ENCODE measurements at regions of chr18 and their contacts with region 1.

Region 1: DNA sequence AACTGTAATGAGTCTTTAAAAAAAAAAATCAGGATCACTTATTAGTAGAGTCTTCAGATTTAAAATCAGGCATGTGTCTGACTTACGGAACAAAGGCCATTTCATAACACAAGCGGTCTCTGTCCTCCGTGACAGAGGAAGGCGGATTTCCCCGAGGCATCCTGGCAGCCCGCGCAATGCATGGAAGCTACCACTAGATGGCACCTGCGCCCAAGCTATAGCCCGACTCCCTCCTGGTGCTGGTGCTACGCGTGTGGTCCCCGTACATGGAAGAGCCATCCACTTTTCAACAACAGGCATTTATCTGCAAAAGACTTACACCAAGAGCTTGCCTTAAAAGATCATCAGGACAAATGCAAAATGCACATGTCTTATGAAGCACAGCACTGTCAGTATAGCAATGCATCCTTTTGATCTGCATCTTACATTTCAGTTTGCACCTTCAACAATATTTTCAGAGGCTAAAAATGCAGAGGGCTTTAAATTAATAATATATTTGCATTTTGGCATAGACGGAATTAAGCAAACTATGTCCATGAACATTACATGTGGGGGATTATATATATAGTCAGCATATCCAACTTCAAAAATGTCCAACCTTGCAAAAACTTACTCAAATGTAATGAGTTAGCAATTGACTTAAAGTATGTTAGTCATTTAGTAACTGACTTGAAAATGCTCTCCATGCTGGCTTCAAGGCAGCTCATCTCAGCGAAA is 96.0 kb downstream of the ZNF516 start:
- DNase-seq: peak; percentile 57 to 86 (median 78)
- ATAC-seq: peak; percentile 96
- H3K4me3 ChIP-seq: no peak overlapping the region
- H3K4me3 Mint-ChIP-seq: no peak overlapping the region
- H3K27ac ChIP-seq: no peak overlapping the region
- H3K27ac Mint-ChIP-seq: no peak overlapping the region
- H3K4me1 ChIP-seq: no peaks in the 10 kb centered on the region
- H3K4me1 Mint-ChIP-seq: peaks cover 6% of the 10 kb centered on the region
- H3K27me3 ChIP-seq: no peaks in the 10 kb centered on the region
- H3K27me3 Mint-ChIP-seq: peaks cover 4% of the 10 kb centered on the region
- CTCF ChIP-seq: peak; percentile 96

Region 2: GRCh38 chr18:76384861-76385680 is 14.0 kb before region 1 on chr18:
- CTCF ChIA-PET with region 1: interaction called, 23 read pairs
- POLR2A ChIA-PET with region 1: interaction called, 5 read pairs
- intact Hi-C with region 1: no loop called
- DNase-seq: no peak
- ATAC-seq: no peak
- H3K4me3 ChIP-seq: no peak overlapping the region
- H3K4me3 Mint-ChIP-seq: no peak overlapping the region
- H3K27ac ChIP-seq: no peak overlapping the region
- H3K27ac Mint-ChIP-seq: no peak overlapping the region
- H3K4me1 ChIP-seq: peaks cover 21% of the 10 kb centered on the region
- H3K4me1 Mint-ChIP-seq: peaks cover 27% of the 10 kb centered on the region
- H3K27me3 ChIP-seq: no peaks in the 10 kb centered on the region
- H3K27me3 Mint-ChIP-seq: no peaks in the 10 kb centered on the region
- CTCF ChIP-seq: no peak

Region 3: DNA sequence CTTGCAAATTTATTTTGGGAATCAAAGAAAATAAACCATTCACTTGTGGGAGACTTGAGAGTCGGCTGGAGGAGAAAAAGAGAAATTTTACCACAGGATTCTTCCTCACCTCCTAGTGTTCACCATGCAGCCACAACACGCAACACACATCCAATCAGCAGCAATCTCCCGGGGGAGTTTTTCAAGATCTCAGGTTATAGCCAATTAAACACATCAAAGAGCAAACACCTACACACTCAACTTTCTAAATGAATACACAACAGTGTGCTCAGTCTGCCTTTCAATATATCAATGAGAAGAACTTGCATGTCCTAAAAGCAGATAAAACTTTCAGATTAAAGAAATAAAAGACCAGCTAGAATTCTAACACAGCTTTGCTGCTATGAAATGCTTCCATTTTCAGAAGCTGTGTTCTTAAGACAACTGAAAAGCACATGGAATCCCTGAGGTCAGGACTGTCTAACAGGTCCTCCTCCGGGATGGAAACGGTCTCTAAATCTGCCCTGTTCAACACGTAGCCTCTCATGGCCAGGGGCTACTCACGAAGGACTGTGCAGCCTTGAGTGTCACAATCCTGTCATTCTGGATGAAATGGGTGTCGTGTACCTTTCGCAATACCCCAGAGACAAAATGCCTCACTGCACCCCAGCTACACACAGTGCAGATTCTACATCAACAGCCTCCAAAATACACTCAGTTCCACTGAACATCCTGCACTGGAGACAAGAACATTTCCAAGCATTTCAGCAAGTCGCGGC is 11.8 kb after region 1 on chr18:
- CTCF ChIA-PET with region 1: interaction called, 15 read pairs
- POLR2A ChIA-PET with region 1: interaction called, 4 read pairs
- intact Hi-C with region 1: no loop called
- DNase-seq: no peak
- ATAC-seq: no peak
- H3K4me3 ChIP-seq: no peak overlapping the region
- H3K4me3 Mint-ChIP-seq: no peak overlapping the region
- H3K27ac ChIP-seq: no peak overlapping the region
- H3K27ac Mint-ChIP-seq: no peak overlapping the region
- H3K4me1 ChIP-seq: no peaks in the 10 kb centered on the region
- H3K4me1 Mint-ChIP-seq: peaks cover 13% of the 10 kb centered on the region
- H3K27me3 ChIP-seq: no peaks in the 10 kb centered on the region
- H3K27me3 Mint-ChIP-seq: no peaks in the 10 kb centered on the region
- CTCF ChIP-seq: no peak

Region 4: DNA sequence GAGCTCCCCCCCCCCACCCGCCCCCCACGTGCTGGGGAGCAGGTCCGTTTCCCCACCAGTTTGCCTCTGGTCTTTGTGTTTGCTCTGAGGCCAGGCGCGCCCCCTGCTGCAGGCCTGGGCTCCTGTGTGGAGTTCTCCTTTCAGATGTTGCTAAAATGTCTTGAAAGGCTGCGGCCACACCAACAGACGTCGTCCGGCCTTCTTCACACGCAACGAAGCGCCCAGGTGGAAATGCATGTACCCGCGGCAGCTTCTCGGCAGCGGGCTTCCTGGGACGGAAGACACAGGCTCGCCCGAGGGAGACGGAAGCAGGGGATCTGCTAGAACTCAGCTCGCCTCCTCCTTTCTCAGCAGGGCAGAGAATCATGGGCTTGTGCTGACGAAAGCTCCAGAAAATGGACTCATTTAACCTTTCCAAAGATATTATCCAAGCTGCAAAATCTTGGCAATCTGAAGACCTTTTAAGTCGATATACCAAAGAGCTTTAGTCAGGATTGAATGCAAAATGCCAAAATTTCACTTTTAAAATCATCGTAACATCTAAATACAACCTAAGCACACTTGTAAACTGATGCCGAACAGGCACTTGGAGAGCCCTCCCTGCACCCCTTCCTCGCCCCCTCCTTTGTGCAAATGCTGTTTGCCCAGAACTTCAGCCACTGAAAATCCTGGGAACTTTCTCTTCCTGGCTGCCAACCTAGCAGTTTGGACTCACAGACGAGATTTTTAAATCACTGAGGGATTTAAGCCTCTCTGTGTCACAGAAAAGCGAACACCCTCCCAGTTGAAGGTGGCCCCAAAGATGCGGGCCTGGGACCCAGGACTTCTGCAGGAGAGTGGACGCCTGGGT is 221.5 kb after region 1 on chr18:
- CTCF ChIA-PET with region 1: interaction called, 10 read pairs
- POLR2A ChIA-PET with region 1: no interaction called
- intact Hi-C with region 1: loop called in 1 of 2 experiments (anchors 5 kb)
- DNase-seq: peak in 6 of 9 experiments; percentile 1 to 57 (median 30)
- ATAC-seq: no peak
- H3K4me3 ChIP-seq: no peak overlapping the region
- H3K4me3 Mint-ChIP-seq: peak overlapping the region; percentile 53
- H3K27ac ChIP-seq: no peak overlapping the region
- H3K27ac Mint-ChIP-seq: no peak overlapping the region
- H3K4me1 ChIP-seq: peaks cover 5% of the 10 kb centered on the region
- H3K4me1 Mint-ChIP-seq: peaks cover 10% of the 10 kb centered on the region
- H3K27me3 ChIP-seq: peaks cover 0 to 3% of the 10 kb centered on the region in 2 experiments
- H3K27me3 Mint-ChIP-seq: peaks cover 37% of the 10 kb centered on the region
- CTCF ChIP-seq: no peak

Region 5: GRCh38 chr18:76686737-76687262 is 287.7 kb after region 1 on chr18:
- CTCF ChIA-PET with region 1: interaction called, 14 read pairs
- POLR2A ChIA-PET with region 1: no interaction called
- intact Hi-C with region 1: loop called in 1 of 2 experiments (anchors 1 kb)
- DNase-seq: peak in 2 of 9 experiments; percentile 29 to 49
- ATAC-seq: peak; percentile 42
- H3K4me3 ChIP-seq: no peak overlapping the region
- H3K4me3 Mint-ChIP-seq: no peak overlapping the region
- H3K27ac ChIP-seq: no peak overlapping the region
- H3K27ac Mint-ChIP-seq: no peak overlapping the region
- H3K4me1 ChIP-seq: no peaks in the 10 kb centered on the region
- H3K4me1 Mint-ChIP-seq: peaks cover 7% of the 10 kb centered on the region
- H3K27me3 ChIP-seq: no peaks in the 10 kb centered on the region
- H3K27me3 Mint-ChIP-seq: peaks cover 34% of the 10 kb centered on the region
- CTCF ChIP-seq: no peak

Region 6: GRCh38 chr18:76697441-76697901 is 298.4 kb after region 1 on chr18:
- CTCF ChIA-PET with region 1: interaction called, 10 read pairs
- POLR2A ChIA-PET with region 1: no interaction called
- intact Hi-C with region 1: no loop called
- DNase-seq: no peak
- ATAC-seq: no peak
- H3K4me3 ChIP-seq: no peak overlapping the region
- H3K4me3 Mint-ChIP-seq: no peak overlapping the region
- H3K27ac ChIP-seq: no peak overlapping the region
- H3K27ac Mint-ChIP-seq: no peak overlapping the region
- H3K4me1 ChIP-seq: no peaks in the 10 kb centered on the region
- H3K4me1 Mint-ChIP-seq: no peaks in the 10 kb centered on the region
- H3K27me3 ChIP-seq: peaks cover 4 to 7% of the 10 kb centered on the region in 2 experiments
- H3K27me3 Mint-ChIP-seq: peaks cover 51% of the 10 kb centered on the region
- CTCF ChIP-seq: no peak

Region 7: GRCh38 chr18:76709659-76710645 is 310.9 kb after region 1 on chr18:
- CTCF ChIA-PET with region 1: interaction called, 186 read pairs
- POLR2A ChIA-PET with region 1: interaction called, 7 read pairs
- intact Hi-C with region 1: loop called (anchors 1 kb)
- DNase-seq: peak; percentile 30 to 76 (median 66)
- ATAC-seq: peak; percentile 94
- H3K4me3 ChIP-seq: no peak overlapping the region
- H3K4me3 Mint-ChIP-seq: no peak overlapping the region
- H3K27ac ChIP-seq: no peak overlapping the region
- H3K27ac Mint-ChIP-seq: no peak overlapping the region
- H3K4me1 ChIP-seq: peaks cover 4% of the 10 kb centered on the region
- H3K4me1 Mint-ChIP-seq: peaks cover 4% of the 10 kb centered on the region
- H3K27me3 ChIP-seq: no peaks in the 10 kb centered on the region
- H3K27me3 Mint-ChIP-seq: peaks cover 6% of the 10 kb centered on the region
- CTCF ChIP-seq: peak; percentile 99